ENCODE measurements at regions of chr6 and their contacts with region 1.

Region 1: GRCh38 chr6:36340618-36341454 is 4.1 kb upstream of the BNIP5 start:
- DNase-seq: peak; percentile 75
- H3K4me3 Mint-ChIP-seq: peak overlapping the region; percentile 9
- H3K27ac Mint-ChIP-seq: no peak overlapping the region
- H3K4me1 Mint-ChIP-seq: peaks cover 13% of the 10 kb centered on the region
- H3K27me3 Mint-ChIP-seq: peaks cover 35% of the 10 kb centered on the region

Region 2: GRCh38 chr6:36360241-36361054 is 19.6 kb after region 1 on chr6:
- CTCF ChIA-PET with region 1: interaction called, 21 read pairs
- POLR2A ChIA-PET with region 1: no interaction called
- DNase-seq: peak; percentile 77
- H3K4me3 Mint-ChIP-seq: no peak overlapping the region
- H3K27ac Mint-ChIP-seq: no peak overlapping the region
- H3K4me1 Mint-ChIP-seq: peaks cover 27% of the 10 kb centered on the region
- H3K27me3 Mint-ChIP-seq: peaks cover 6% of the 10 kb centered on the region